ENCODE measurements at regions of chrX and their contacts with region 1.

Region 1: GRCh38 chrX:40539214-40540142 is 41.3 kb upstream of the ATP6AP2 start:
- DNase-seq: peak; percentile 89
- H3K4me3 Mint-ChIP-seq: peak overlapping the region; percentile 56
- H3K27ac Mint-ChIP-seq: peak overlapping the region; percentile 66
- H3K4me1 Mint-ChIP-seq: peaks cover 19% of the 10 kb centered on the region
- H3K27me3 Mint-ChIP-seq: peaks cover 13% of the 10 kb centered on the region

Region 2: GRCh38 chrX:40331762-40332161 is 207.7 kb before region 1 on chrX:
- intact Hi-C with region 1: no loop called
- DNase-seq: no peak
- H3K4me3 Mint-ChIP-seq: no peak overlapping the region
- H3K27ac Mint-ChIP-seq: no peak overlapping the region
- H3K4me1 Mint-ChIP-seq: no peaks in the 10 kb centered on the region
- H3K27me3 Mint-ChIP-seq: peaks cover 1% of the 10 kb centered on the region

Region 3: GRCh38 chrX:40484408-40485091 is 54.9 kb before region 1 on chrX:
- intact Hi-C with region 1: no loop called
- DNase-seq: no peak
- H3K4me3 Mint-ChIP-seq: no peak overlapping the region
- H3K27ac Mint-ChIP-seq: no peak overlapping the region
- H3K4me1 Mint-ChIP-seq: peaks cover 12% of the 10 kb centered on the region
- H3K27me3 Mint-ChIP-seq: no peaks in the 10 kb centered on the region

Region 4: DNA sequence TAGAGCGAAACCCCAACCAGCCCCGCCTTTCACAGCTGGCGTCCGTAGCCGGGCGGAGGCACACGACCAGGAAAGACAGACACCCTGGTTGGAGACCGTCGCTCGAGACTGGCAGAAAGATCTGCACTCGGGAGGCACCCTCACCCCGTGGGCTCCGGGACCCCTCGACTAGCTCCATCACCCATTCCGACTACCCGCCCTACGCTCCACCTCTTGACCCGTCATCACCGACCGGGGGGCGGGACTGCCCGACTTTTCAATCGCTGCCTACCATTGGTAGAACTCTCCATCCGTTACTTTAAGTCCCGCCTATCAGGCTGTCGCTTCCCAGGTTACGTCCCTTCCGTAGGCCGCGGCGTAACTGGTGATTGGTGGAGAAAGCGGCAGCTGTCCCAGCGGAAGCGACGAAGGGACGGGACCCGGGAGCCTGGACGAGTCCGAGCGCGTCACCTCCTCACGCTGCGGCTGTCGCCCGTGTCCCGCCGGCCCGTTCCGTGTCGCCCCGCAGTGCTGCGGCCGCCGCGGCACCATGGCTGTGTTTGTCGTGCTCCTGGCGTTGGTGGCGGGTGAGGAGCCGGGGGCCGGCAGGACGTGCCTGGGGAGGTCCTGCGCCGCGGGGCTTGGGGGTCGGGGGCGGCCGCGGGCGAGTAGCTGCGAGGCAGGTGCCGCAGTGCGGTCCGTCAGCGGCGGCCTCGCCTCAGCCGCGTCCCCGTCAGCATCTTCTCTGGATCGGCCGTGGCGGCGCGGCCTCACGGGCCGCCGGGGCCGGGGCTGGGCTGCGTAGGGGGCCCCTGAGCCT is 41.3 kb after region 1 on chrX and contains the start of gene ATP6AP2:
- intact Hi-C with region 1: loop called (anchors 5 kb)
- DNase-seq: peak; percentile 97
- H3K4me3 Mint-ChIP-seq: peak within 1 kb of the TSS; percentile 91
- H3K27ac Mint-ChIP-seq: peak within 1 kb of the TSS; percentile 95
- H3K4me1 Mint-ChIP-seq: peaks cover 19% of the 10 kb centered on the region
- H3K27me3 Mint-ChIP-seq: no peaks in the 10 kb centered on the region
- total RNA-seq, gene ATP6AP2: 66.5 and 68.7 TPM in 2 replicates

Region 5: GRCh38 chrX:40792433-40792832 is 253.0 kb after region 1 on chrX:
- intact Hi-C with region 1: loop called (anchors 1 kb)
- DNase-seq: no peak
- H3K4me3 Mint-ChIP-seq: no peak overlapping the region
- H3K27ac Mint-ChIP-seq: no peak overlapping the region
- H3K4me1 Mint-ChIP-seq: peaks cover 2% of the 10 kb centered on the region
- H3K27me3 Mint-ChIP-seq: peaks cover 4% of the 10 kb centered on the region

Measured in activated CD4-positive, alpha-beta T cell treated with anti-CD3 and anti-CD28 coated beads, Interleukin-2, amount 10 ng/mL, durations not matched to agents 24 days and 14 days (primary cell).